H1 (cell line): ENCODE measurements at regions of chr2 and their contacts with region 1.

Region 1: DNA sequence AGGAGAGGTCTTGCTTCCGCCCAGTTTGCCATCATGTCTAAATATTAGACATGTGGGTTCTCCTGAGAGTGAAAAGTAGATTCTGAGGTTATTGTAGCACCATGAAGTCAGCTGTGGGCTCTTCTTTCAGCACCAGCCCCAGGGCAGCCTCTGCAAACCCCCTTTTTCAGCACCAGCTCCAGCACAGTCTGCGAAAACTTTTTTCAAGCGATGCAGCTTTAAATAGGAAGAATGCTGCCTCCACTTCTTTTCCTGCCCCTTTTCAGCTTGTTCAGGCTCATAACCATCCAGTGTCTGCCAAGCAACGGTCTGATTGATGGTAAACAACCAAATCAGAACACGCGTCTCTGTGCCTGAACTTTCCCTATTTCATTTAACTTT is at the start of gene COL5A2:
- DNase-seq: no peak
- H3K4me3 ChIP-seq: peak within 1 kb of the TSS; percentile 46 to 71 (median 58)
- H3K27ac ChIP-seq: no peak within 1 kb of the TSS
- H3K4me1 ChIP-seq: no peaks in the 10 kb centered on the region; a peak in 3 of 7 replicates
- H3K27me3 ChIP-seq: no peaks in the 10 kb centered on the region
- CTCF ChIP-seq: no peak
- EP300 ChIP-seq: no peak
- POLR2A ChIP-seq: no peak
- RAD21 ChIP-seq: no peak
- total RNA-seq, gene COL5A2: 22.8 and 24.2 TPM in 2 replicates

Region 2: DNA sequence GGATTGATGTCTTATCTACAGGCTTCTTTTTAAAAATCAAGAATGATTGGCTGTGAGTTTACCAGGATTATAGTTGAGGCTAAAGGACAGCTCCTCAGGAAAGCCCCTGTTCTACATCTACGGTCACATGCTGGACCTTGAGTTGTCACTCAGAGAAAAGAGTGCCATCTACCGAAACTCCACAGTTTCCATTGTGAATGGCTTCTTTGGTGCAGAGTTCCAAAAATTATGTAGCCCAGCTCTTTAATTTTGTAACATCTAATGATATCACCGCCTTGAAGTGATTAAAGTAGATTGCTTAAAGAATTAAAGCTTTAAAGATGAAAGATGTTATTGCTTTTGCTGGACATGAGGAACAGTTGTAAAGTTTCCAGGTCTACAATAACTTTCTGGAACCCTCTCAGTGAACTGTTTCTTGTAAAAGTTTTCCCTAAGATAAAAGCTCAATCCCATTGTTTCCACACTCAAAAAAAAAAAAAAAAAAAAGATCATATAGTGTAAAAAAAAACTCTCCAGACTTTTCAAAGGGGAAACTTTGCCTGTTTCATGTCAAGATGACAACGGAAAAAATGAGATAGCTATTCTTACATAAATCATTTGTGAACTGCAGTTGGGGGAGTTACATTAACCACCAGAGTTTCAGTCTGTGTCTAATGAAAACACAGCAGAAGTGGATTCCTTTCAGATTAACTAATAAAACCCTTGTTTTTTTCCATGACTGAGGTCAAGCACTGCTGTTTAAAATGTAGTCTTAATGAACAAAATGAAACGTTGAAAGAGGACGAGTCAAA is 201.1 kb before region 1 on chr2:
- CTCF ChIA-PET with region 1: no interaction called
- POLR2A ChIA-PET with region 1: no interaction called
- DNase-seq: no peak
- H3K4me3 ChIP-seq: no peak overlapping the region
- H3K27ac ChIP-seq: no peak overlapping the region
- H3K4me1 ChIP-seq: no peaks in the 10 kb centered on the region
- H3K27me3 ChIP-seq: no peaks in the 10 kb centered on the region
- CTCF ChIP-seq: no peak
- EP300 ChIP-seq: no peak
- POLR2A ChIP-seq: no peak
- RAD21 ChIP-seq: peak; percentile 46 to 47

Region 3: GRCh38 chr2:189164746-189165145 is 14.8 kb before region 1 on chr2:
- CTCF ChIA-PET with region 1: interaction called, 16 read pairs
- POLR2A ChIA-PET with region 1: no interaction called
- DNase-seq: no peak
- H3K4me3 ChIP-seq: no peak overlapping the region
- H3K27ac ChIP-seq: no peak overlapping the region
- H3K4me1 ChIP-seq: peaks cover 0 to 12% (median 2%) of the 10 kb centered on the region in 4 experiments; a peak in 2 of 7 replicates
- H3K27me3 ChIP-seq: no peaks in the 10 kb centered on the region
- CTCF ChIP-seq: no peak
- EP300 ChIP-seq: no peak
- POLR2A ChIP-seq: no peak
- RAD21 ChIP-seq: no peak

Region 4: DNA sequence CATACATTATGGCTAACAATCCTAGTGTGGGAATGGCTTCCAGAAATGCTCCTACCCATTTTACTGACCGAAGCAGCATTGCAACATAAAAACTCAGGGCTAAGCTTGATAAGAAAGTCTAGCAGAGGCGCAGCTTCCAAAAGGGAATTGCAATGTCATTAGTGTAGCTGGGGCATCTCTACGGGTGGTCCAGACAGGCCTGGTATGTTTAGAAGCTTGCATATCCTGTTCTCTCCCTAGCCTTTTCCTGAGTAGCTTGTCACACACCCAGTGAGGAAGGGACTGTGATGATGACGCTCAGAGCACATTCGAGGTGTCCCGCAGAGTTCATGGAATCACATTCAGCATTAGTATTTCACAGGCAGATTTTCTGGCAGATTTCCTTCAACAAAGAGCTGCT is 38.0 kb after region 1 on chr2:
- CTCF ChIA-PET with region 1: interaction called, 12 read pairs
- POLR2A ChIA-PET with region 1: no interaction called
- DNase-seq: peak; percentile 60 to 77
- H3K4me3 ChIP-seq: no peak overlapping the region; a peak in 1 of 8 replicates
- H3K27ac ChIP-seq: peak overlapping the region; percentile 69
- H3K4me1 ChIP-seq: peaks cover 2 to 11% (median 7%) of the 10 kb centered on the region in 4 experiments; a peak in 4 of 7 replicates
- H3K27me3 ChIP-seq: no peaks in the 10 kb centered on the region
- CTCF ChIP-seq: no peak
- EP300 ChIP-seq: peak in 1 of 2 experiments; percentile 69; a peak in 1 of 3 replicates
- POLR2A ChIP-seq: peak in 1 of 2 experiments; percentile 47; a peak in 1 of 3 replicates
- RAD21 ChIP-seq: no peak